Activated CD4-positive, alpha-beta memory T cell treated with anti-CD3 and anti-CD28 coated beads for 36 hours (primary cell): ENCODE measurements at regions of chr6 and their contacts with region 1.

Region 1: DNA sequence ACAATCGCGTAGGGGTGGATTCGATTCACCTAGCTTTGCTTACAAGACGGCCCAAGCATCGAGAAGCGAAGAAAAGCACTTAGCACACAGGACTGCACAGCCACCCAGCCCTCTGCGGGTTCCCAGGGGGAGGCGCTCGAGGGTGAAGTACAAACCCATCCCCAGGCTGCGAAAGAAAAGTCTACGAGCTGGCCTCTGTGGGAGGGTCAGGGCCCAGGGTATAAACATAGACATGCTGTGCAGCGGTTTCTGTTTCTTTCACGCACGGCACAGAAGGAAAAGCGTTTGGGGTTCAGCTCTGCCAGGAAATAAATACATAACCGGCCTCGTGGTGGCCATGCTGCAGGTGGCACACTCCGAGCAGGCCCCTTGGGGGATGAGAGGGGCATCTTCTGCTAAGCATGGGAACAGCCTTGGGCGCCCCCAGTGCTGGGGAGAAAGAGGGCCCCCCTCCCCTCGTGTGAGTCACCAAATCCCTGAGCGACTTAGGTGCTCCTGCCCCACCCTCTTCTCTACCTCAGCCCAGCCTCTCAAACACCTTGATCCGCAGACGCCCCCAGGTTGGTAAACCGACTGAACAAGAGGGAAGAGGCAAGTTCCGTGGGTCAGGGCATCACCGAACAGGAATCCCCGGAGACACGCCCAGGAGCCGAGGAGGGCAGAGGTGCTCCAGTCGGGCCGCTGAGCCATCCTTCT is 91.6 kb upstream of the RIPOR2 start:
- DNase-seq: peak; percentile 92
- H3K4me3 Mint-ChIP-seq: peak overlapping the region; percentile 70
- H3K27ac Mint-ChIP-seq: peak overlapping the region; percentile 96
- H3K4me1 Mint-ChIP-seq: peaks cover 75% of the 10 kb centered on the region
- H3K27me3 Mint-ChIP-seq: no peaks in the 10 kb centered on the region

Region 2: DNA sequence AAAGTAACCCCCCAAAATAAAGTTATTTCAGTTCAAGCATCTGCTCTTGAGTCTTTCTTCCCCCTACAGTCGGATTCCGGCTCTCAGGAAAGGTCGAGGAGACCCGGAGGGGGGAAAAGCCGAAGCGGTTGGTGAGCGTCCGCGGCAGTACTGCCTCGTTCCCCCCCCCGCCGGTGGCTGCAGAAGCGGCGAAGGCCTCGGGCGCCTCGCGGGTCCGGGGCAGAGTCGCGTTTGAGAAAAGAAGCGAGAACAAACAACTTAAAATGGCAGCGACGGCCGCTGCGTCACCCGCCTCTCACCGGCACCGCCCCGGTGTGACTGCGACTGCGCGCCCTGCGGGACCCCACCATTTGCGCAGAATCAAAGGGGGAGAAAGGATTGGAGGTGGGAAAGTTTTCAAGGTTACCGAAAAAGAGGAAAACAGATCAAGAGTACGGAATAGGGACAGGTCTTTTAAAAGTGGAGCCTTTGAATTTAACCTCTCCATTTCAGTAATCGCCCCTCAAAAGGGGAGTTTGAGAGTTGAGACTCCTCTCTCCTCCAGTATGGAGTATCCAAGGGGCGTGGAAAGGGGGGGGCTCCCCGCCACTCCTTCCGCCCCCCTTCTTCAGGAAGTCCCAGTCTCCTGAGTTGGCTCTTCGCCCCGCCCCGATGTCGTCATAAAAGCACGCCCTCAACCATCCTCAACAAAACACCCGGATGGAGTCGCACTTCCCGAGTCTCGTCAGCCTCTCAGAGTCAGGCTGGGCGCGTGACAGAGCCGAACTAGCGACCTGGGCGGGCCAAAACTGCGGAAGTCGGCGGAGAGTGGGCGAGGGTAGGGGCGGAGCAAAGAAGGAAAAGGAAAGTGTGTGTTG is 306.5 kb before region 1 on chr6:
- CTCF ChIA-PET with region 1: no interaction called
- POLR2A ChIA-PET with region 1: interaction called, 7 read pairs
- intact Hi-C with region 1: loop called (anchors 2 kb)
- DNase-seq: peak; percentile 100
- H3K4me3 Mint-ChIP-seq: peak overlapping the region; percentile 100
- H3K27ac Mint-ChIP-seq: peak overlapping the region; percentile 99
- H3K4me1 Mint-ChIP-seq: peaks cover 32% of the 10 kb centered on the region
- H3K27me3 Mint-ChIP-seq: peaks cover 1% of the 10 kb centered on the region

Region 3: DNA sequence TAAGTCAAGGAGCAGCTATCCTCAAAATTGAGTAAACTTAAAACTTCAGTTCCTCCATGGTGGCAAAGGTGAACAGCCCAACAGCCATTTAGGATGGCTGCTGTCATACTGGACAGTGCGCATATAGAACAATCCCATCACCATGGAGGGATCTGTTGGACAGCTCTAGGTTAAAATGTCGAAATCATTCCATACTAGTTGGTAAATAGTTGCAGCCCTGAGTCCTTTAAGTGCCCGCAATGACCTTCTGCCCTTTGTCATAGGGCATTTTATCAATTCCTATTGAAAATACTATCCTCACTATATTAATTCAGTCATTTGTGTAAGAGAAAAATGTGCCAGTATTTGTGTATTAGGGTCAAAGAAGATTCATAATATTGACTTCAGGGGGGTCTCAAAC is 219.8 kb before region 1 on chr6:
- CTCF ChIA-PET with region 1: no interaction called
- POLR2A ChIA-PET with region 1: no interaction called
- intact Hi-C with region 1: no loop called
- DNase-seq: no peak
- H3K4me3 Mint-ChIP-seq: no peak overlapping the region
- H3K27ac Mint-ChIP-seq: peak overlapping the region; percentile 59
- H3K4me1 Mint-ChIP-seq: no peaks in the 10 kb centered on the region
- H3K27me3 Mint-ChIP-seq: no peaks in the 10 kb centered on the region

Region 4: DNA sequence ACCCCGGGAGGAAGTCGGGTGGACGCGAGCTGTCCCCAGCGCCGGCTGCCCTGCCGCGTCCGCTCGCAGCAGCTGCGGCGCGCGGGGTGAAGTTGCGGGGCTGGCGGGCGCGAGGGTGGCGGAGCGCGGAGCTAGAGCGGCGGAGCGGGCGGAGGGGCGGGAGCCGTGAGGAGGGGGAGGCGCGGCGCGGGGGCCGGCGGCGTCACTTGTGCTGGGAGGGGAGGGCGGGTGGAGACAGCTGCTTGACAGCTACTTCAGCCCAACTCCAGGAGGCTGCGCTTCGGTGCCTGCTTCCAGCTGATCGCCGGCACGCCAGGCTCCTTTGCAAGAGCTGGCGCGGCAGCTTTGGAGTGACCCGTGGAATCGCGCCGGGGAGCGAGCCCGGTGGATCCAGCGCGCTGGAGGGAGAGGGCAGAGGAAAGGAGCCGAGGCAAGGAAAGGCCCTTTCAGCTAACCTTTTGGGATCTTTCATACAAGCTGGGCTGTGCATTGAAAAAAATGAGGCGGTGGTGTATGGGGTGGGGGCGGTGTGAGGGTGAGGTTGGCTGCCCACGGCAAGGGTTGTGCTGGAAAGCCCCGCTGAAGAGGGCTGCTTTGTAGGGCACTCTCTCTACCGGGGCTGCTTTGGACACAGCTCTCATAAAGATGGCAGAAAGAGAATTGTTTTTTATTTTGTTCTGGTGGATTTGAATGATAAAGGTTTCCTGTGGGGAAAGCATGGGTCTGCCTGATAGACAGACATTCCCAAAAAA is 116.2 kb before region 1 on chr6:
- CTCF ChIA-PET with region 1: interaction called, 6 read pairs
- POLR2A ChIA-PET with region 1: interaction called, 16 read pairs
- intact Hi-C with region 1: no loop called
- DNase-seq: peak; percentile 70
- H3K4me3 Mint-ChIP-seq: peak overlapping the region; percentile 91
- H3K27ac Mint-ChIP-seq: peak overlapping the region; percentile 95
- H3K4me1 Mint-ChIP-seq: peaks cover 85% of the 10 kb centered on the region
- H3K27me3 Mint-ChIP-seq: no peaks in the 10 kb centered on the region

Region 5: GRCh38 chr6:25006565-25007001 is 20.8 kb before region 1 on chr6:
- CTCF ChIA-PET with region 1: interaction called, 9 read pairs
- POLR2A ChIA-PET with region 1: interaction called, 15 read pairs
- intact Hi-C with region 1: loop called (anchors 1 kb)
- DNase-seq: peak; percentile 66
- H3K4me3 Mint-ChIP-seq: peak overlapping the region; percentile 10
- H3K27ac Mint-ChIP-seq: peak overlapping the region; percentile 78
- H3K4me1 Mint-ChIP-seq: peaks cover 77% of the 10 kb centered on the region
- H3K27me3 Mint-ChIP-seq: no peaks in the 10 kb centered on the region

Region 6: GRCh38 chr6:25053875-25054371 is 26.6 kb after region 1 on chr6:
- CTCF ChIA-PET with region 1: interaction called, 55 read pairs
- POLR2A ChIA-PET with region 1: interaction called, 11 read pairs
- intact Hi-C with region 1: loop called (anchors 1 kb)
- DNase-seq: peak; percentile 50
- H3K4me3 Mint-ChIP-seq: peak overlapping the region; percentile 9
- H3K27ac Mint-ChIP-seq: peak overlapping the region; percentile 80
- H3K4me1 Mint-ChIP-seq: peaks cover 82% of the 10 kb centered on the region
- H3K27me3 Mint-ChIP-seq: no peaks in the 10 kb centered on the region

Region 7: DNA sequence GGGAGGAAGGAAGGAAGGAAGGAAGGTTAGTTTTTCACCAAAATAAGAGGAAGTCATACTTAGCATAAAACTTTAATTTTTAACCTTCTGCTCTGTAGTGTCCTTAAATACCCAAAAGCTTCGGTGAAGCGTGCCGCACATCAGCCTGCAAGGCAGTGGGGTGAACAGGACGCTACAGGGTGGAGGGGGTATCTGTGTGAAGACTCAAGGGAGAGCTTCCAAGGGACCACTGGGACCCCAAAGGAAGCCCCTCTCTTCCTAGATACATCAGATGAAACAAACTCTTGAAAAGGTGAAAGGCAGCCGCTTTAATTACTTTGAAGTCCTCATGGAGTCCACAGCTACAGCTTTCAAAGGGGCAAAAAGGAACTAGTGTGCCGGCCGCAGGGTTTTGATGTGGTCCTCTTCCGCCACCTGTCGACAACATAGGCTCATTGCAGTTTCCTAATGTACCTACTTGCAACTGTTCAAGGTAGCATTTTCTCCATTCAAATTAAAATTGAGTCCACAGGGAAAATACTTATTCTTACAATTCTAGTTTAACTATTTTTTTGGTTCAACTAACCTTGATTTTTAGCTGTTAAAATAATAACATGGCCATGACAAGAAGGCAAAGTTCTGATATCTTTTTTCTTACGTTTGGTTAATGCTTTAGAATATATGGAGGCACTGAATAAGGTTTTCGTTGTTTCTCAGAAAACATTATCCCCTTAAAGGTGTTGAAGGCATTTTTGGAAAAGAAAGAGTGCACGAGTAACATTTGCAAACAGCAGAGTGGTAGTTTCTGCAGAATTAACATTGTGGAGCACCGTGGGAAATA is 43.4 kb after region 1 on chr6:
- CTCF ChIA-PET with region 1: interaction called, 91 read pairs
- POLR2A ChIA-PET with region 1: interaction called, 14 read pairs
- intact Hi-C with region 1: loop called (anchors 1 kb)
- DNase-seq: peak; percentile 90
- H3K4me3 Mint-ChIP-seq: peak overlapping the region; percentile 44
- H3K27ac Mint-ChIP-seq: peak overlapping the region; percentile 78
- H3K4me1 Mint-ChIP-seq: peaks cover 10% of the 10 kb centered on the region
- H3K27me3 Mint-ChIP-seq: no peaks in the 10 kb centered on the region

Region 8: DNA sequence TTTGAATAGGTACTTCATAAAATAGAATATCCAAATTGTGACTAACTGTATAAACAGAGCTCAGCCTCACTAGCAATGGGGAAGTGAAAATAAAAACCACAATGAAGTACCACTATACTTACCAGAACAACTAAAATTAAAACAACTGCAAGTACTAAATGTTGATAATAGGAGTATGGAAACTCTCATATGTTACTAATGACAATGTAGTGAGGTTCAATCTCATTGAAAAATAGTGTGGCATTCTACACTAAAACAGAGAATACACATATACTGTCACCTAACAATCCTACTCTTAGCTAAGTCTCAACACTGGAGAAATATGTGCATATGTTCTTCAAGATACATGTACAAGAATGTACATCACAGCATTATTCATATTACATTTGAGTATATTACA is 119.9 kb after region 1 on chr6:
- CTCF ChIA-PET with region 1: no interaction called
- POLR2A ChIA-PET with region 1: no interaction called
- intact Hi-C with region 1: no loop called
- DNase-seq: no peak
- H3K4me3 Mint-ChIP-seq: no peak overlapping the region
- H3K27ac Mint-ChIP-seq: no peak overlapping the region
- H3K4me1 Mint-ChIP-seq: peaks cover 19% of the 10 kb centered on the region
- H3K27me3 Mint-ChIP-seq: no peaks in the 10 kb centered on the region

Region 9: GRCh38 chr6:25278914-25279747 is 251.8 kb after region 1 on chr6 and contains the start of gene CARMIL1:
- CTCF ChIA-PET with region 1: no interaction called
- POLR2A ChIA-PET with region 1: no interaction called
- intact Hi-C with region 1: no loop called
- DNase-seq: peak; percentile 77
- H3K4me3 Mint-ChIP-seq: peak within 1 kb of the TSS; percentile 81
- H3K27ac Mint-ChIP-seq: peak within 1 kb of the TSS; percentile 44
- H3K4me1 Mint-ChIP-seq: peaks cover 28% of the 10 kb centered on the region
- H3K27me3 Mint-ChIP-seq: no peaks in the 10 kb centered on the region
- total RNA-seq, gene CARMIL1: 2.4 to 2.7 TPM